Calu3 (cell line): ENCODE measurements at regions of chr14 and their contacts with region 1.

Region 1: DNA sequence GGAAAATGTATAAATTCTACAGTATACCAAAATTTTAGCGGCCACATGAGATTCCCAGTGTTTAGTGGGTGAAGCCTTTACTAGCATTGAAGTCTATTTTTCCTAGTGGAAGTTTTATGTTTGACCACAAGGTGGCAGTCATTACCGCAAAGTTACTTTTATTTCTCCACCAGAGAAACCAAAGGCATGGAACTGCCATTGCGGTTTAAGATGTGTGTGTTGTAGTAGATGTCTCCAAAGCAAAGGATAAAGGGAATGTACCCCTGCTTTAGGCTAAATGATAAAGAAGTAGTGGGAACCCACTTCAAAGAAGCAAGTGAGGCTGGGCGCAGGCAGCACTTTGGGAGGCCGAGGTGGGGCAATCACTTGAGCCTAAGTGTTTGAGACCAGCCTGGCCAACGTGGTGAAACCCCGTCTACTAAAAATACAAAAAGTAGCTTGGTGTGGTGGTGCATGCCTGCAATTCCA is 140.5 kb downstream of the PRKCH start:
- DNase-seq: peak; percentile 50
- H3K4me3 Mint-ChIP-seq: no peak overlapping the region
- H3K27ac Mint-ChIP-seq: peak overlapping the region; percentile 78
- H3K4me1 Mint-ChIP-seq: peaks cover 25% of the 10 kb centered on the region
- H3K27me3 Mint-ChIP-seq: no peaks in the 10 kb centered on the region
- CTCF ChIP-seq: peak; percentile 54

Region 2: GRCh38 chr14:60532442-60532841 is 929.4 kb before region 1 on chr14:
- CTCF ChIA-PET with region 1: no interaction called
- intact Hi-C with region 1: no loop called
- DNase-seq: no peak
- H3K4me3 Mint-ChIP-seq: no peak overlapping the region
- H3K27ac Mint-ChIP-seq: peak overlapping the region; percentile 23
- H3K4me1 Mint-ChIP-seq: peaks cover 24% of the 10 kb centered on the region
- H3K27me3 Mint-ChIP-seq: no peaks in the 10 kb centered on the region
- CTCF ChIP-seq: no peak

Region 3: DNA sequence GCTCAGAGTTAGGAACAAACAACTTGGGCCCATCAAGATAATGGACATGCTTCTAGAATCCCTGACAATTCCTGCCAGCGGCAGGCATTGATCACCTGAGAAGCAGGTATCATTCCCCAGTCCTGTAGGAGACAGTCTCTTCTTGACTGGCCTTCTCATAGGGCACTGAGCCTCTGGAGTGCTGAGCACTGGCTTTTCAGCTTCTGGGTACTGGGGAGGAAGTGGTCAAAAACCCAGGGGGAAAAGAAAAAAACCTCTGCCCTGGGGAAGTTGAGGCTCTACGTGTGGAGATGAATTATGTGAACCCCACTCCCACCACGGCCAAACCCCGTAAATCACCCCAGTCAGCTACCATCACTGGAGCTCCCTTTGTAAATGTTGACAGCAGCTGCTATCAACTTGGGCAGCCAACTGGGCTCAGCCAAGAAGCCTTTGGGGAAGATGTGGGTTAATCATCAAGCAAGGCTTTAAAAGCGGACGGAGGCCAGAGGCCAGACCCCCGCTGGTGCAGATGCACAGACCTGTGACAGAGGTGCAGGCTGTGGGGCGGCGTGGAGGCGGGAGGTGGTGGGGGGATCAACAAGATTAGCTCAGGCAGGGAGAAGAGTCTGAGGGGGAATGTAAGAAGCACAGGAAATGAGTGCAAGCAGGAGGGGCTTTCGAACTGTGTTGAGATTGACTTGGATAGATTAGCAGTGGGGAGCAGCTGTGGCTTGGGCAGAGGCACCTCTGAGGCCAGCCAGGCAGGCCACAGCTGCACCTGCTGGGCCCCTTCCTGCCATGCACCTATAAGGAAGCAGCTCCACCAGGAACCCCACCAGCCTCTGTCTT is 128.1 kb after region 1 on chr14:
- CTCF ChIA-PET with region 1: no interaction called
- intact Hi-C with region 1: no loop called
- DNase-seq: no peak
- H3K4me3 Mint-ChIP-seq: no peak overlapping the region
- H3K27ac Mint-ChIP-seq: no peak overlapping the region
- H3K4me1 Mint-ChIP-seq: peaks cover 26% of the 10 kb centered on the region
- H3K27me3 Mint-ChIP-seq: no peaks in the 10 kb centered on the region
- CTCF ChIP-seq: no peak

Region 4: DNA sequence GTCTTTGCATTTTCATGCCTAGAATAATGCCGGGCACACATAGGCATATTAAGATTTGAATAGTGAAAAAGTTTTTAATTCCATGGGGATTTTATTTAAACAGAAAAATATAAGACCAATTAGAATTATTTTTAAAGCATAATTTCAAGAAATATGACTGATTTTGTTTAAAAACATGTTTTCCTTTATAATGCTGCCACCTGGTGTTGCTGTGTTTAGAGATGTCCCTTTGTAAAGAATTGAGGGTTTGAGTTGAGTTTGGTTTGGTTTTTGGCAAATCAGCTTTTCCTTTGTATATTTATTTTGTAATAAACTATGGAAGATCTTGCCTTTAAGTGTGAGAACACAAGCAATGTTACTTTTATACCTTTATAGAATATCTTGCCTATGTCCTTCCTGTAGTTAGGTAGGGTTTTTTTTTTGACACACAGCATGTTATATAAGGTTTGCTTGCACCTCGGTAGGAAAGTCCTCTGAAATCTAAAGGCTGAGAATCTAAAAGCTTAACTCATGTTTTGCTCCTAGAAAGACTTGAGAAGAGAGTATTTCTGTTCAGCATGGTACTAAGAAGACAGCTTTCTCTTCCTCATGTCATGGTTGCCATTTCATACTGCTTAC is 269.0 kb after region 1 on chr14:
- CTCF ChIA-PET with region 1: no interaction called
- intact Hi-C with region 1: loop called (anchors 2 kb)
- DNase-seq: no peak
- H3K4me3 Mint-ChIP-seq: no peak overlapping the region
- H3K27ac Mint-ChIP-seq: no peak overlapping the region
- H3K4me1 Mint-ChIP-seq: peaks cover 39% of the 10 kb centered on the region
- H3K27me3 Mint-ChIP-seq: no peaks in the 10 kb centered on the region
- CTCF ChIP-seq: no peak

Region 5: GRCh38 chr14:61750708-61751474 is 289.0 kb after region 1 on chr14:
- CTCF ChIA-PET with region 1: no interaction called
- intact Hi-C with region 1: loop called (anchors 5 kb)
- DNase-seq: peak; percentile 89
- H3K4me3 Mint-ChIP-seq: peak overlapping the region; percentile 74
- H3K27ac Mint-ChIP-seq: peak overlapping the region; percentile 70
- H3K4me1 Mint-ChIP-seq: peaks cover 40% of the 10 kb centered on the region
- H3K27me3 Mint-ChIP-seq: no peaks in the 10 kb centered on the region
- CTCF ChIP-seq: no peak